Calu3 (cell line): ENCODE measurements at regions of chr19 and their contacts with region 1.

Region 1: DNA sequence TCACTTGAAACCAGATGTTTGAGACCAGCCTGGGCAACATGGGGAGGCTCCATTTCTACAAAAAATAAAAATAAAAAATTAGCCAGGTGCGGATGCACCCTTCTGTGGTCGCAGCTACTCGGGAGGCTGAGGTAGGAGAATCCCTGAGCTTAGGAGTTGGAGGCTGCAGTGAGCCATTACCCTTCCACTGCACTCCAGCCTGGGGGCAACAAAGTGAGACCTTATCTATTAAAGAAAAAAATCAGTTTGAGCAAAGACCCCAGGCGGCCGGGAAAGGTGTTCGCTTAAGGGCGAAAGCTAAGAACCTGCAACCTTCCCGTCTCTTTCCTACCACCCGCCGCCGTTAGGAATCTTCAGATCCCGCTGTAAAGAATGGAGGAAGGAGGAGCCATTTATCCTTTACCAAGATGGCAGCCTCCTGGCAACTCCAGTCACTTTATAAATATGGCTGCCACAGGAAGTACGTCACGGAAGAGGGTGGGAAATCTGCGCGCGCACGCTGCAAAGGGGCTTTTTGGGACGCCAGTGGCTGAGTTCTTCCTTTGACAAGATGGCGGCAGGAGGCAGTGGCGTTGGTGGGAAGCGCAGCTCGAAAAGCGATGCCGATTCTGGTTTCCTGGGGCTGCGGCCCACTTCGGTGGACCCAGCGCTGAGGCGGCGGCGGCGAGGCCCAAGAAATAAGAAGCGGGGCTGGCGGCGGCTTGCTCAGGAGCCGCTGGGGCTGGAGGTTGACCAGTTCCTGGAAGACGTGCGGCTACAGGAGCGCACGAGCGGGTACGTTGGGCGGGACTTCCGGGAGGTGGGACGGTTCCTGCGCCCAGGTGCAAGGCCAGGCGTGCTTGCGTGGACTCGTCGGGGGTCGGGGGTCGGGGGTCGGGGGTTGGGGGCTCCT is at the start of gene NOP53:
- DNase-seq: peak; percentile 96
- H3K4me3 Mint-ChIP-seq: peak within 1 kb of the TSS; percentile 92
- H3K27ac Mint-ChIP-seq: peak within 1 kb of the TSS; percentile 98
- H3K4me1 Mint-ChIP-seq: peaks cover 24% of the 10 kb centered on the region
- H3K27me3 Mint-ChIP-seq: no peaks in the 10 kb centered on the region
- CTCF ChIP-seq: no peak
- total RNA-seq, gene NOP53: 193 and 222 TPM in 2 replicates

Region 2: DNA sequence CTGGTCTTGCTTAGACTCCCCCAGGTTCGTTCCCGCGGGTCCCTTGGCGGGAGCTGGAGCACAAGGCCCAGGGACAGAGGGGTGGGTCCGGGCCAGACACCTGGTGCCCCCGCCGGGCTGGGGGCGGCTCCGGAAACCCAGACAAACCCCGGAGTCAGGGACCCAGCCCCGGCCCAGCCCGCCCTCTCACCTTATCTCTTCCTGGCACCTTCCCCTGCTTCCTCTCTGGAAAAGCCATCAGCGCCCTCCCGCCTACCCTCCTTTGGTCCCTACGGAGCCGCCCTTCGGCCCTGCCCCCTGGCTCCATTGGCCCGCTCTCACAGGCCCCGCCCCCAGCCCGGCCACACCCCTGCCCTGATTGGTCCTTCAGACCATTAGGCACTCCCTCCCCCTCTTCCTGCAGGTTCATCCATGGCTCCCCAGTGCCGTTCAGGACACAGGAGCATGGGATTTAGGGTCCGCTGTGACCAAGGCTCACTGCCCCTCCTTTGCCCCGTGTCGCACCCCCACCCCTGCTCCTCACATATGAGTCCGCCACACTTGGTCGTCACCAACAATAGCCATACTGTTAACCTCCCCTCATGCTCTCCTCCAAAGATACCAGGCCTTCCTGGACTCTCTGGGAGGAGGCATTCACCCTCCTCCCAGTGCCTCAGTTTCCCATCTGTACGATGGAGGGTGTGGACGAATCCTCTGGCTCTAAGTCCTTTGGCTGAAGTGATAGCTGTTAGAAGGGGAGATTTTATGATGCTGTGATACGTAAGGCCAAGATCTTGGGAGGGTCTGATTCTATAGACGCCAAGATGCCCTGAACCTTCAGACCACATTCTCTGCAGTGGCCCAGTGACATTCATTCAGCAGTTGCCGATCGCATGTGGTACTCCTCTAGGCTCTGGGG is 15.0 kb before region 1 on chr19:
- CTCF ChIA-PET with region 1: interaction called, 6 read pairs
- intact Hi-C with region 1: loop called (anchors 2 kb)
- DNase-seq: peak; percentile 96
- H3K4me3 Mint-ChIP-seq: peak overlapping the region; percentile 85
- H3K27ac Mint-ChIP-seq: peak overlapping the region; percentile 96
- H3K4me1 Mint-ChIP-seq: peaks cover 45% of the 10 kb centered on the region
- H3K27me3 Mint-ChIP-seq: no peaks in the 10 kb centered on the region
- CTCF ChIP-seq: no peak